Naive thymus-derived CD4-positive, alpha-beta T cell (primary cell): ENCODE measurements at regions of chr15 and their contacts with region 1.

Region 1: DNA sequence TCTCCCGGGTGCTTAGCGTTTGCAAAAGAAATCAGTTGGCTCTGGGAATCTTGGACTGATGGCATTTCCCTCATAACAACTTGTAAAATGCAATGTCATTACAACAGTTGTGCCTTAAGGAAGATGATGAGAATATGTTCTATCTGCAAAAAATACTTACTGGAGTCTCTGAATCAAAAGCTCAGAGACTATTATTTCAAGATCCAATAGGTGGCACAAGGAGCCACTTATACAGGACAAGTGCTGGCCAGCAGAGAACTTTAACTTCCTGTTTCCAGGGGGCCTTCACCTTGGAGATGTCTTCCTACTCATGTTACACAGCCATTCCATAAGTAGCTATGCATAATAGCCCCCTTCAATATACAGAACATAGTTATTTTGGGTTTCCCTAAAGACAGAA is 8.9 kb upstream of the RPS27L start:
- DNase-seq: peak in 1 of 9 donors; percentile 13
- ATAC-seq: peak; percentile 61
- H3K4me3 ChIP-seq: no peak overlapping the region
- H3K4me3 Mint-ChIP-seq: no peak overlapping the region
- H3K27ac ChIP-seq: no peak overlapping the region
- H3K27ac Mint-ChIP-seq: peak overlapping the region in 1 of 9 donors; percentile 49
- H3K4me1 ChIP-seq: no peaks in the 10 kb centered on the region
- H3K4me1 Mint-ChIP-seq: peaks cover 0 to 6% (median 5%) of the 10 kb centered on the region in 7 donors
- H3K27me3 ChIP-seq: no peaks in the 10 kb centered on the region
- H3K27me3 Mint-ChIP-seq: peaks cover 0 to 2% (median 0%) of the 10 kb centered on the region in 5 donors

Region 2: DNA sequence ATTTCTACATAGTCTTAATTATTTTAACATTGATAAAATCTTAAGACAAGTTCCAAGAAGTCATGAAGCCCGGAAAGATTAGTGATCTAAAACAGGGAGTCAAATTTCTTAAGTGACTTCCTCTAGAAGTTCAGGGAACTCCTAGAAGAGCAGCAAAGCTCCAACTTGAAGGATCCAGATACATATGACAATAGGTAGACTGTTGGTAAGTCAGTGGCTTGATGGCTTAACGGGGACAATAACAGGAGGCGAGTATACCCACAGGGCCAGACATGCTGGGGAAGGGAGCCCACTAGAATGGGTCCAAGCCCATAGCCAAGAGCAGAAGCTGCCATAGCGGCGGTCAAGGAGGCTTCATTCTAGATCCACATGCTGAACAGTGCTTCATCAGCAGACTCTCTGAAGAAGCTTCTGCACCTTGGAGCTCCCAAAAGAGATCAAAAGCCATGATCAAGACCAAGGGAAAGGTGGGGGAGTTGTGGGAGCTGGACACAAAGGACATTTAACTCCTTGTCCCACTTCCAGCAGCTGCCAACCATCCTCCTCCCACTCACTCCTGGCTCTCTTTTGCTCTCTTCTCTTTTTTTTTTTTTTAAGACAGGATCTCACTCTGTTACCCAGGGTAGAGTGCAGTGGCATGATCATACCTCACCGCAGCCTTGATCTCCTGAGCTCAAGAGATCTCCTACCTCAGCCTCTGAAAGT is 225.6 kb after region 1 on chr15:
- CTCF ChIA-PET with region 1: interaction called, 10 read pairs
- POLR2A ChIA-PET with region 1: no interaction called
- intact Hi-C with region 1: no loop called
- DNase-seq: no peak
- ATAC-seq: no peak
- H3K4me3 ChIP-seq: no peak overlapping the region
- H3K4me3 Mint-ChIP-seq: peak overlapping the region in 8 of 10 donors; percentile 4 to 71 (median 66)
- H3K27ac ChIP-seq: no peak overlapping the region
- H3K27ac Mint-ChIP-seq: peak overlapping the region in 1 of 9 donors; percentile 56
- H3K4me1 ChIP-seq: peaks cover 0 to 3% of the 10 kb centered on the region in 2 donors
- H3K4me1 Mint-ChIP-seq: peaks cover 8 to 18% (median 14%) of the 10 kb centered on the region in 7 donors
- H3K27me3 ChIP-seq: no peaks in the 10 kb centered on the region
- H3K27me3 Mint-ChIP-seq: peaks cover 0 to 34% (median 4%) of the 10 kb centered on the region in 5 donors

Region 3: DNA sequence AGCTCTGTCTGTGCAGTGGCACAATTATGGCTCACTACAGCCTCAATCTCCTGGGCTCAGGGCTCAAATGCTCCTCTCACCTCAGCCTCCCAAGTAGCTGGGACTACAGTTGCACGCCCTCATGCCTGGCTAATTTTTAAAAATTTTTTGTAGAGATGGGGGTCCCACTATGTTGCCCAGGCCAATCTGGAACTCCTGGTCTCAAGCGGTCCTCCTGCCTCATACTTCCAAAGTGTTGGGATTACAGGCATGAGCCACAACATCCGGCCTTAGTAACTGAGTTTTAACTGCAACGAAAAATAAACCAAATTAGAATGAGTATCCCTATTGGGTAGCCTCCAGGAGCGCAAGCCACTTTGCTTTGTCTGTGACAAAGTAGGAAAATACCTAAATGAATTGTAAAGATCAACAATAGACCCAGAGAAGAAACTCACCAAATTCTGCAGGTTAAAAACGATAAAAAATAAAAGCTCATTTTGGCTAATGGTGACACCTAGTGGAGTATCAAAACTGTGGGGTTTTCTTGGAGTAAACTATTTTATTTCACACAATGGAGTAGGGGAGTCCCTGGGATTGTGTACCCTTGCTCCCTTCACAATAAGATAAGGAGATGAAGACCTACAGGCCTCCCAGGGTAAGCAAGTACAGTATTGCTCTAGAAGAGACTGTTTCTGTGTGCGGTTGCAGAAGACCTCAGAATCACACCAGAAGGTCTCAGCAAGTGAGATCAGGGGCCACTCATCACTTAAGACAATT is 236.5 kb after region 1 on chr15:
- CTCF ChIA-PET with region 1: interaction called, 3 read pairs
- POLR2A ChIA-PET with region 1: no interaction called
- intact Hi-C with region 1: loop called (anchors 1 to 2 kb)
- DNase-seq: peak in 6 of 9 donors; percentile 7 to 60 (median 50)
- ATAC-seq: peak; percentile 67
- H3K4me3 ChIP-seq: no peak overlapping the region
- H3K4me3 Mint-ChIP-seq: no peak overlapping the region
- H3K27ac ChIP-seq: no peak overlapping the region
- H3K27ac Mint-ChIP-seq: no peak overlapping the region
- H3K4me1 ChIP-seq: peaks cover 0 to 3% of the 10 kb centered on the region in 2 donors
- H3K4me1 Mint-ChIP-seq: peaks cover 0 to 19% (median 0%) of the 10 kb centered on the region in 7 donors
- H3K27me3 ChIP-seq: no peaks in the 10 kb centered on the region
- H3K27me3 Mint-ChIP-seq: peaks cover 0 to 6% (median 4%) of the 10 kb centered on the region in 5 donors